Left ventricle myocardium superior (tissue), 1 donor: ENCODE measurements at regions of chr1 and their contacts with region 1.

Region 1: GRCh38 chr1:155983191-155984024 is 5.1 kb upstream of the ARHGEF2 start:
- DNase-seq: peak; percentile 86
- ATAC-seq: peak; percentile 64

Region 2: GRCh38 chr1:155940531-155940992 is 42.8 kb before region 1 on chr1:
- intact Hi-C with region 1: loop called (anchors 5 kb)
- DNase-seq: no peak
- ATAC-seq: peak; percentile 77